Activated CD4-positive, alpha-beta memory T cell treated with anti-CD3 and anti-CD28 coated beads for 36 hours (primary cell): ENCODE measurements at regions of chr3 and their contacts with region 1.

Region 1: GRCh38 chr3:24004171-24004938 is 59.3 kb downstream of the NR1D2 start:
- DNase-seq: peak; percentile 49
- H3K4me3 Mint-ChIP-seq: no peak overlapping the region
- H3K27ac Mint-ChIP-seq: no peak overlapping the region
- H3K4me1 Mint-ChIP-seq: peaks cover 4% of the 10 kb centered on the region
- H3K27me3 Mint-ChIP-seq: no peaks in the 10 kb centered on the region

Region 2: DNA sequence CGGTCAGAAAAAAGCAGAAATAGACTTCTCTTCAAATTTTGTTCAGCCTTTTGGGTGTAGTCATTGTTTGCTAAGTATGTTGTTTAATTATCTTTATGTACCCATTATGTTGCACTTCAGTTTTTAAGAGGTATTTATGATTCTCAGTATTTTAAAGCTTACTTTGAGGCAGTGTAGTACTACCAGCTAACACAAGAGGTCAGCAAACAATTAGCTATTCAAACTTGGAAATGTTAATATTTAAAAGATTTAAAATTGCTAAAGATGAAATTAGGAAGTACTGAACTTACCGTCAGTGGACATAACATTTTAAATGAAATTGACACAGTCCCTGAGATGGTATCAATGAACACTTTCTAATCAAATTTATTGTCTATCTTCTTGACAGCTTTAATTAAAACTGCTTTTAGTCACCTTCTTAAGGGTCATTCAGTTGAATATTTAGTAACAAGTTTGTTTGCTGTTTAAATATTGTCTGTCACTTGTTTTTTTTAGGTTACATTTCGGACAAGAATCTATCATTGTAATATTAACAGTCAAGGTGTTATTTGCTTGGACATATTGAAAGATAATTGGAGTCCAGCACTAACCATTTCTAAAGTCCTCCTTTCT is 115.6 kb before region 1 on chr3:
- CTCF ChIA-PET with region 1: interaction called, 6 read pairs
- POLR2A ChIA-PET with region 1: no interaction called
- intact Hi-C with region 1: loop called (anchors 5 kb)
- DNase-seq: no peak
- H3K4me3 Mint-ChIP-seq: no peak overlapping the region
- H3K27ac Mint-ChIP-seq: no peak overlapping the region
- H3K4me1 Mint-ChIP-seq: no peaks in the 10 kb centered on the region
- H3K27me3 Mint-ChIP-seq: no peaks in the 10 kb centered on the region

Region 3: GRCh38 chr3:23959135-23959900 is 45.0 kb before region 1 on chr3:
- CTCF ChIA-PET with region 1: interaction called, 3 read pairs
- POLR2A ChIA-PET with region 1: no interaction called
- intact Hi-C with region 1: loop called (anchors 2 kb)
- DNase-seq: peak; percentile 43
- H3K4me3 Mint-ChIP-seq: no peak overlapping the region
- H3K27ac Mint-ChIP-seq: peak overlapping the region; percentile 57
- H3K4me1 Mint-ChIP-seq: peaks cover 33% of the 10 kb centered on the region
- H3K27me3 Mint-ChIP-seq: no peaks in the 10 kb centered on the region

Region 4: GRCh38 chr3:24154013-24154695 is 149.8 kb after region 1 on chr3:
- CTCF ChIA-PET with region 1: no interaction called
- POLR2A ChIA-PET with region 1: no interaction called
- intact Hi-C with region 1: loop called (anchors 1 kb)
- DNase-seq: no peak
- H3K4me3 Mint-ChIP-seq: no peak overlapping the region
- H3K27ac Mint-ChIP-seq: peak overlapping the region; percentile 64
- H3K4me1 Mint-ChIP-seq: peaks cover 27% of the 10 kb centered on the region
- H3K27me3 Mint-ChIP-seq: peaks cover 3% of the 10 kb centered on the region